ENCODE measurements at regions of chr19 and their contacts with region 1.

Region 1: DNA sequence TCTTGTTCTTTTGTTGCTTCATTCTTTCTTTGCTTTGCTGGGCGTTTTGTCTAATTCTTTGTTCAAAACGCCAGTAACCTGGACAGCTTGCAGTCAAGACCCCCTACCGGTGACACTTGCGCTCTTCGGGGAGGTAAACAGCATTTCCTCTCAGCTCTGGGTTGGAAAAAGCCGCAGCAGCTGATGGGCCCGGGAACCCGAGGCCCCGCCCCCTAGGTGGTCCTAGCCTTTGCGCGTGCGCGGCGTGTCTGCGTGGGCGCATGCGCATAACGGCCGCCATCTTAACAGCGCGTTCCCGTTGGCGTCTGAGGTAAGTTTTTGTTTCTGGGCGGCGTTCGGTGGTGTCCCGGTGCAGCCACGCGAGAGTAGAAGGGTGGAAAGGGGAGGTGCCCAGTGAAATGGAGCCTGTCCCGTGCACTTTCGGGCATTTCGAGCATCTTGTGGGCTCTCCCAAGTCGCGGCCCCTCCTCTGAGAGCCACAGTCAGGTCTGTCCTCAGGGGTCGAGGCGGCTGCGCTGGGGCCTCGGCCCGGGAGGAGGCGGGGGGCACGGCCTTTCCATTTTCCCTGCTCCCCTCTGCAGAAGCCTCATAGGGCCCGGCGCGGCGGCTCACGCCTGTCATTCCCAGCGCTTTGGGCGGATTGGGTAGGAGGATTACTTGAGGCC is at the start of gene ZNF559:
- DNase-seq: peak; percentile 60 to 78
- ATAC-seq: peak; percentile 76 to 95
- H3K4me3 ChIP-seq: peak within 1 kb of the TSS; percentile 64 to 80 (median 70)
- H3K27ac ChIP-seq: peak within 1 kb of the TSS; percentile 72 to 79 (median 78)
- H3K4me1 ChIP-seq: peaks cover 0 to 6% of the 10 kb centered on the region in 2 donors
- H3K27me3 ChIP-seq: no peaks in the 10 kb centered on the region
- CTCF ChIP-seq: peak in 2 of 5 experiments; percentile 21 to 26
- POLR2A ChIP-seq: no peak
- total RNA-seq, gene ZNF559: 1.4 to 3.8 (median 3.0) TPM

Region 2: DNA sequence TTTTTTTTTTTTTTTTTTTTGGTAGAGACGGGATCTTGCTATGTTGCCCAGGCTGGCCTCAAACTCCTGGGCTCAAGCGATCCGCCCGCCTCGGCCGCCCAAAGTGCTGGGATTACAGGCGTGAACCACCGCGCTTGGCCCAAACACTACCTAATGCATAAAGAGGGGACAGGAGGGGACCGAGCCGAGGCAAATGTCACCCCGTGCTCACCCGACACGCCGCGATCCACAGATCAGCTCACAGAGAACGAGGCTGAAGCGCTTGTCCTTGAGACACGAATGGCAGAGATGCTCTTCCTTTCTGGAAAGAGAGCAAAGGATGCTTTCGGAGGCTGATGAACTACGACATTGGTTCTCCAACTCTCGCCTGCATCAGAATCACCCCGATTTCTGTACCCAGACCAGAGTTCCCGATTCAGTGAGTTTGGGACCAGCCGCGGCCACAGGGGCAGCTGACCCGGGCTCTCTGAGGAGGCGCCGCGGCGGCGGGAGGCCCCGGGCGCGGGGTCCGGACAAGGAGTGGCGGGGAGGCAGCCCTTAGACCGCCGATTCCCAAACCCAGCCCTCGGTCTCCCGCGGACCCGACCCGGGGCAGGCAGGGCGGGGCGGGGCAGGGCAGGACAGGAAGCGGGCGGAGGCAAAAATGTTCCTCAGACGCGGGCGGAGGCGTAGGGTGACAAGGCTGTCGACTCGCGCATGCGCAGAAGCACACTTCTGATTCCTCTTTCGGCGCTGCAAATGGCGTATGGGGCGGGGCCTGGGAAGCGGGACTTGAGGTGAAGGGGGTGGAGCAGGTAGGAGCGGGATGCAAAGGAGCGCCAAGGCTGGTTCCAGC is 14.7 kb before region 1 on chr19 and contains the start of gene ZNF699:
- in situ Hi-C with region 1: no loop called
- intact Hi-C with region 1: loop called (anchors 2 kb)
- DNase-seq: peak; percentile 93 to 95
- ATAC-seq: peak; percentile 99 to 100
- H3K4me3 ChIP-seq: peak within 1 kb of the TSS; percentile 79 to 100 (median 83)
- H3K27ac ChIP-seq: peak within 1 kb of the TSS; percentile 77 to 94 (median 85)
- H3K4me1 ChIP-seq: peaks cover 0 to 11% of the 10 kb centered on the region in 2 donors
- H3K27me3 ChIP-seq: no peaks in the 10 kb centered on the region
- CTCF ChIP-seq: no peak
- POLR2A ChIP-seq: peak; percentile 44 to 49
- total RNA-seq, gene ZNF699: 0.87 to 4.1 (median 1.8) TPM

Region 3: GRCh38 chr19:9342610-9343304 is 18.7 kb after region 1 on chr19:
- in situ Hi-C with region 1: no loop called
- intact Hi-C with region 1: no loop called
- DNase-seq: no peak
- ATAC-seq: no peak
- H3K4me3 ChIP-seq: peak overlapping the region in 1 of 4 donors; percentile 28
- H3K27ac ChIP-seq: no peak overlapping the region
- H3K4me1 ChIP-seq: no peaks in the 10 kb centered on the region
- H3K27me3 ChIP-seq: no peaks in the 10 kb centered on the region
- CTCF ChIP-seq: no peak
- POLR2A ChIP-seq: no peak

Region 4: GRCh38 chr19:9785367-9786331 is 461.6 kb after region 1 on chr19:
- in situ Hi-C with region 1: loop called in 3 of 4 experiments (anchors 25 kb)
- intact Hi-C with region 1: loop called (anchors 10 kb)
- DNase-seq: peak; percentile 82
- ATAC-seq: peak; percentile 81 to 83
- H3K4me3 ChIP-seq: peak overlapping the region; percentile 66 to 77 (median 72)
- H3K27ac ChIP-seq: peak overlapping the region; percentile 86 to 94 (median 88)
- H3K4me1 ChIP-seq: no peaks in the 10 kb centered on the region
- H3K27me3 ChIP-seq: peaks cover 8 to 42% (median 36%) of the 10 kb centered on the region in 3 donors
- CTCF ChIP-seq: no peak
- POLR2A ChIP-seq: peak; percentile 41 to 73

Measured in gastrocnemius medialis (tissue), 4 donors.